ENCODE measurements at regions of chr20 and their contacts with region 1.

Region 1: DNA sequence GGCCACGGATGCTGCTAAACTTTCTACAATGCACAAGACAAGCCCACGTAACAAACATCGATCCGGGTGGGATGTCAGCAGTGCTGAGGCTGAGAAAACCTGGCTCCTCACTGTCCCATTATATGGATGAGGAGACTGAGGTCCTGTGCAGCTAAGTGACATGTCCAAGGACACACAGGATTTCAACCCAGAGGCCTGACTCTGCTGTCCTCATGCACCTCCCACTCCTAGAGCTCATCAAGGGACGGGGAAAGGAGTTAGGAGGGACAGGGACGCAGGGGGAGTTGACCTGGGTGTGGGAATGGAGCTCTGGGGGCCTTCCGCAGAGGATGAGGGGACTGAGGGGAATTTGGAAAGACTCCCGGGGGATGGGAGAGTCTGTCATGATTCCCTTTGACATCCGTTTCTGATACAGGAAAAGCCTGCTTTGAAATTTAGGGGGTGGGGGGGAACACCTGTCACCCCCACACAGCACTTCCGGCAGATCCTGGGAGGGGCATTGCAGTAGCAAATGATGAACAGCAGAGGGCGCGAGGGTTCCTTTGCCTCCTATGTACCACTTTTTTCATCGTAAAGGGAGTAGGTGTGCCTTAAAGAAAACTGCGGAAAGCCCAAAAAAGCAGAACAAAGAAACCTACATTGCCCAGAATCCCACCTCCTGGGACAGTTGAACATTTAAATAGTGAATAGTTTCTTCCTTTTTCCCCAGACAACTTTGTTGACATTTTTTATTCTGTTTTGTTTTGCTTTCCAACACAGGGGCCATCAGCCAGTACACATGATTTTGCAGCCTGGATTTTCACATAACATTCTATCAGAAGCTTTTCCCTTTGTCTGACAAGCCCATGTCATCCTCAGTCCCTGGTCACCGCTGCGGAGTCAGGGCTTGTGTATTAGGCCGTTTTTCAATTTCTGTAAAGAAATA is 48.6 kb downstream of the SLC2A10 start:
- DNase-seq: peak; percentile 76
- H3K4me3 ChIP-seq: peak overlapping the region in 1 of 2 experiments; percentile 14; a peak in 1 of 4 replicates
- H3K27ac ChIP-seq: no peak overlapping the region
- H3K4me1 ChIP-seq: no peaks in the 10 kb centered on the region
- H3K27me3 ChIP-seq: no peaks in the 10 kb centered on the region
- CTCF ChIP-seq: peak; percentile 98
- EP300 ChIP-seq: no peak
- RAD21 ChIP-seq: peak; percentile 82

Region 2: GRCh38 chr20:46746956-46747526 is 11.0 kb before region 1 on chr20:
- CTCF ChIA-PET with region 1: interaction called, 46 read pairs
- POLR2A ChIA-PET with region 1: no interaction called
- DNase-seq: no peak
- H3K4me3 ChIP-seq: no peak overlapping the region
- H3K27ac ChIP-seq: no peak overlapping the region
- H3K4me1 ChIP-seq: no peaks in the 10 kb centered on the region
- H3K27me3 ChIP-seq: no peaks in the 10 kb centered on the region
- CTCF ChIP-seq: no peak
- EP300 ChIP-seq: no peak
- RAD21 ChIP-seq: no peak

Region 3: DNA sequence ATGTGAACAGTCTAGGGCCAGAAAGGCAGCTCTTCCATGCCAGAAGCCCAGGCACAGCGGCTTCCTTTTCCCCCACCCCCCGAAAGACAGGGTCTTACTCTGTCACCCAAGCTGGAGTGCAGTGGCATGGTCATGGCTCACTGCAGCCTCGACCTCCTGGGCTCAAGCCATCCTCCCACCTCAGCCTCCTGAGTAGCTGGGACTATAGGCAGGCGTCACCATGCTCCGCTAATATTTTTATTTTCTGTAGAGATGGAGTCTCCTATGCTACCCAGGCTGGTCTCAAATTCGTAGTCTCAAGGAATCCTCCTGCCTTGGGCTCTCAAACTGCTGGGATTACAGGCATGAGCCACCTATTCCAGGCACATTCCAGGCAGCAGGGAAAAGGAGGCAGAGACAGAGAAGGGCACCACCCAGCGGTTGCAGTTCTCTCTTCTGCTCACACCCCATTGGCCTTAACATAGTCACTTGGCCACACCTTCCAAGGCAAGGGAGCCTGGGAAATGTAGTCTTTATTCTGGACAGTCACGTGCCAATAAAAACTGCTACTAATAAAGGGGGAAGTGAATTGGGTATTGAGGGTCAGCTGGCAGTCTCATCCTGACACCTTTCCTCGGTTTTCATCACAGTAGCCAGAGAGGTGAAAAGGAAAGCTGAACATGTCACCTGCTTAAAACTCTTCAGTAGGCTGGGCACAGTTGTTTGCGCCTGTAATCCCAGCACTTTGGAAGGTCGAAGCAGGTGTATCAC is 392.6 kb after region 1 on chr20:
- CTCF ChIA-PET with region 1: interaction called, 163 read pairs
- POLR2A ChIA-PET with region 1: no interaction called
- DNase-seq: peak; percentile 82
- H3K4me3 ChIP-seq: no peak overlapping the region; a peak in 1 of 4 replicates
- H3K27ac ChIP-seq: no peak overlapping the region
- H3K4me1 ChIP-seq: peaks cover 5 to 8% of the 10 kb centered on the region in 2 experiments; a peak in 1 of 4 replicates
- H3K27me3 ChIP-seq: no peaks in the 10 kb centered on the region
- CTCF ChIP-seq: peak; percentile 80
- EP300 ChIP-seq: no peak
- RAD21 ChIP-seq: peak; percentile 94